ENCODE measurements at regions of chr9 and their contacts with region 1.

Region 1: GRCh38 chr9:5843794-5844504 is 11.0 kb upstream of the ERMP1 start:
- DNase-seq: peak in 1 of 5 donors; percentile 19
- H3K4me3 ChIP-seq: no peak overlapping the region
- H3K27ac ChIP-seq: peak overlapping the region in 1 of 2 donors; percentile 12
- H3K4me1 ChIP-seq: peaks cover 8% of the 10 kb centered on the region
- H3K27me3 ChIP-seq: no peaks in the 10 kb centered on the region
- CTCF ChIP-seq: no peak
- EP300 ChIP-seq: no peak
- POLR2A ChIP-seq: no peak

Region 2: DNA sequence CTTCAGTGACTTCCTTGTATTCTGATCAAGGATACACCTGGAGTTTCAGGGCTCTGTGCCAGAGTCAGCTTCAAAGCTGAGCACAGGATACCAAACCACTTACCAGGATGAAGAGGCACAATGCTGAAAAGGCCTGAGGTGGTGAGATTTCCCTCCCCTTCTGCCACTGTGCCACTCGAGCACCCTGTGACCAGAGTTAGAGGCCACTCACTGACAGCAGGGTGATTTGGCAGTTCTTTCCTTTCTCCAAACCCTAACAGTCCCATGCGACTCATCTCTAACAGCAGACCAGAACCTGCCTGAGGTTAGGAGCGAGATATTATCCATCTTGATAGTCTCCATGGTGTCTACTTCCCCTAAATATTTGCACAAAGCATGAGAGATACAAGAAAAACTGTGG is 408.0 kb before region 1 on chr9:
- intact Hi-C with region 1: no loop called
- DNase-seq: no peak
- H3K4me3 ChIP-seq: no peak overlapping the region
- H3K27ac ChIP-seq: no peak overlapping the region
- H3K4me1 ChIP-seq: peaks cover 1% of the 10 kb centered on the region
- H3K27me3 ChIP-seq: no peaks in the 10 kb centered on the region
- CTCF ChIP-seq: no peak
- EP300 ChIP-seq: no peak
- POLR2A ChIP-seq: no peak

Region 3: DNA sequence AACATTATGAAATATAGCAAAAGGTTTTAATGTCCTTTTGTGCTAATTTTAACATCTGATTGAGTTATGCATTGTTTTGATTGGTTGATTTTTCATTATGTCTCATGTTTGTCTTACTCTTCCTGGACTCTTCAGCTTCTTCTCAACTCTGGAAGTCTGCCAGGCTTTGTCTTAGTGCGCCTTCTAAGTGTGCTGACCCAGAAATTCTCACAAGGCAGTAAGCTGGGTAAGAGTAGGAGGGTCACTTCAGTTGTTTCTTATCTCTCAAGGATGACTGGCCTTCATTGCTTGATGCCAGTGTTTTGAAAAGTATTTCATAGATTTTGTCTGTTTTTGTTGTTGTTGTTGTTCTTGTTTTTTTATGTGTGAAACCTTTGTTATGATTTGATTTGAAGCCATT is 155.8 kb before region 1 on chr9:
- intact Hi-C with region 1: no loop called
- DNase-seq: no peak
- H3K4me3 ChIP-seq: no peak overlapping the region
- H3K27ac ChIP-seq: no peak overlapping the region
- H3K4me1 ChIP-seq: no peaks in the 10 kb centered on the region
- H3K27me3 ChIP-seq: no peaks in the 10 kb centered on the region
- CTCF ChIP-seq: no peak
- EP300 ChIP-seq: no peak
- POLR2A ChIP-seq: no peak

Region 4: DNA sequence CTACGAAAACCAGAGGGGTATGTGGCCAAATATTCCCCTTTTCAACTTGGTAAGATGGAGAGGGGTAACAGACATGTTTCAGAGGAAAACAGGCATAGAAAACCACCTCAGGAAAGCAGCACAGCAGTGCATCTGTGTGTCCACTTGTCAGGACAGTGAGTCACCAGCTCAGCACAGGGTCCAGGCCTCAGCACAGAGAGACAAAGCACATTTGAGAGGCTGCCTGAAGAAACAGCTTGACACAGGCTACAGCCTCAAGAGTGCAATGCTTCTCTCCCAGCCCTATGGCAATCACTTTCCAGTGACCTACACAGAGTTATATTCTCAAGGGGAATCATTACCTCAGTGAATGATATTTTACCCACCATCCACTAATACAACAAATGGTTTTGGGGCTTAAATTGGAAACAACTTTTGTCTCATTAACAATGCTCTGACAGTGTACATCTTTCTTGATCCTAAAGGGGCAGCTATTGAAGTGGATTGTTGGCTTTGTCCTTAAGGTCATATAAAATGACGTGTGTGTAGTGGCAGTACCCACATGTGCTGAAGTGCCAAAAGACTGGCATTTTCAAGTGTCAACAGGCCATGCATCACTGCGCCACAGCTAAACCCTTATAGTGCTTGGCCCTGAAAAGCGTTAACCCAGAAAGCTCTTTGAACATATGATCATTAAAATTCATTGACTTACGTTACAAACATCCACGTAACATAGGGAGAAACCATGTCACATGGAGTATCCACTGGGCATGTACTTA is 57.4 kb before region 1 on chr9:
- intact Hi-C with region 1: loop called in 1 of 4 experiments (anchors 10 kb)
- DNase-seq: no peak
- H3K4me3 ChIP-seq: no peak overlapping the region
- H3K27ac ChIP-seq: no peak overlapping the region
- H3K4me1 ChIP-seq: no peaks in the 10 kb centered on the region
- H3K27me3 ChIP-seq: no peaks in the 10 kb centered on the region
- CTCF ChIP-seq: no peak
- EP300 ChIP-seq: no peak
- POLR2A ChIP-seq: no peak